ENCODE measurements at regions of chr1 and their contacts with region 1.

Region 1: DNA sequence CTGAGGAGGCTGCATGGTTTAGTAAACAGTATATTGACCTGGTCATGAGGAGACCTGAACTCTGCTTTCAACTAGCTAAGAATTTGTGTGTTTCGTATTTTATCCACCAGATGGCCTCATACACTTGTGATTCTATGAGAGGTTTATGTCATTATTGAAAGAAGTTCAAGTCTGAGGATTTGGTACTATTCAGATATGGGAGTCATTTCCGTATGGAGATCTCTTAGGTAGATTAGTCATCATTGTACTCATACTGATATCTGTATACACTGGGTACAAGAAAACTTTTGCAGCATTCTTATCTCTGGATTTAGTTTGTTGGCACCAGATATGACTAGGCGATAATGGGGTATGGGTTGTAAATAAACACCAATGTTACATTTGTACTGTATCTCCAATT is 26.6 kb downstream of the ATF6 start:
- DNase-seq: peak in 3 of 14 experiments; percentile 52 to 67 (median 66)
- ATAC-seq: peak; percentile 68
- H3K4me3 ChIP-seq: no peak overlapping the region
- H3K4me3 Mint-ChIP-seq: no peak overlapping the region
- H3K27ac ChIP-seq: no peak overlapping the region
- H3K27ac Mint-ChIP-seq: no peak overlapping the region
- H3K4me1 ChIP-seq: no peaks in the 10 kb centered on the region
- H3K4me1 Mint-ChIP-seq: peaks cover 14% of the 10 kb centered on the region
- H3K27me3 ChIP-seq: no peaks in the 10 kb centered on the region
- H3K27me3 Mint-ChIP-seq: no peaks in the 10 kb centered on the region
- CTCF ChIP-seq: peak; percentile 58

Region 2: GRCh38 chr1:161749509-161750407 is 43.0 kb before region 1 on chr1 and contains the start of gene DUSP12:
- CTCF ChIA-PET with region 1: no interaction called
- POLR2A ChIA-PET with region 1: no interaction called
- intact Hi-C with region 1: no loop called
- DNase-seq: peak; percentile 75 to 94 (median 82)
- ATAC-seq: peak; percentile 96
- H3K4me3 ChIP-seq: peak within 1 kb of the TSS; percentile 95
- H3K4me3 Mint-ChIP-seq: peak within 1 kb of the TSS; percentile 99
- H3K27ac ChIP-seq: peak within 1 kb of the TSS; percentile 70 to 73
- H3K27ac Mint-ChIP-seq: peak within 1 kb of the TSS; percentile 91
- H3K4me1 ChIP-seq: peaks cover 20% of the 10 kb centered on the region
- H3K4me1 Mint-ChIP-seq: peaks cover 43% of the 10 kb centered on the region
- H3K27me3 ChIP-seq: no peaks in the 10 kb centered on the region
- H3K27me3 Mint-ChIP-seq: peaks cover 8% of the 10 kb centered on the region
- CTCF ChIP-seq: no peak
- total RNA-seq, gene DUSP12: 20.3 to 23.0 TPM

Region 3: GRCh38 chr1:161864577-161864976 is 71.8 kb after region 1 on chr1:
- CTCF ChIA-PET with region 1: no interaction called
- POLR2A ChIA-PET with region 1: no interaction called
- intact Hi-C with region 1: loop called in 1 of 2 experiments (anchors 10 kb)
- DNase-seq: peak in 4 of 14 experiments; percentile 11 to 32 (median 25)
- ATAC-seq: peak; percentile 37
- H3K4me3 ChIP-seq: no peak overlapping the region
- H3K4me3 Mint-ChIP-seq: no peak overlapping the region
- H3K27ac ChIP-seq: no peak overlapping the region
- H3K27ac Mint-ChIP-seq: no peak overlapping the region
- H3K4me1 ChIP-seq: no peaks in the 10 kb centered on the region
- H3K4me1 Mint-ChIP-seq: peaks cover 6% of the 10 kb centered on the region
- H3K27me3 ChIP-seq: no peaks in the 10 kb centered on the region
- H3K27me3 Mint-ChIP-seq: no peaks in the 10 kb centered on the region
- CTCF ChIP-seq: peak; percentile 25

Region 4: GRCh38 chr1:162023547-162024501 is 231.1 kb after region 1 on chr1 and contains the start of gene OLFML2B:
- CTCF ChIA-PET with region 1: no interaction called
- POLR2A ChIA-PET with region 1: no interaction called
- intact Hi-C with region 1: loop called in 1 of 2 experiments (anchors 5 kb)
- DNase-seq: peak in 13 of 14 experiments; percentile 14 to 63 (median 38)
- ATAC-seq: peak; percentile 89
- H3K4me3 ChIP-seq: peak within 1 kb of the TSS; percentile 68
- H3K4me3 Mint-ChIP-seq: peak within 1 kb of the TSS; percentile 95
- H3K27ac ChIP-seq: no peak within 1 kb of the TSS
- H3K27ac Mint-ChIP-seq: no peak within 1 kb of the TSS
- H3K4me1 ChIP-seq: peaks cover 13% of the 10 kb centered on the region
- H3K4me1 Mint-ChIP-seq: peaks cover 7% of the 10 kb centered on the region
- H3K27me3 ChIP-seq: peaks cover 7 to 22% of the 10 kb centered on the region in 2 experiments
- H3K27me3 Mint-ChIP-seq: peaks cover 42% of the 10 kb centered on the region
- CTCF ChIP-seq: no peak
- total RNA-seq, gene OLFML2B: 0.08 TPM in 1 of 2 experiments, not detected in the other

Region 5: DNA sequence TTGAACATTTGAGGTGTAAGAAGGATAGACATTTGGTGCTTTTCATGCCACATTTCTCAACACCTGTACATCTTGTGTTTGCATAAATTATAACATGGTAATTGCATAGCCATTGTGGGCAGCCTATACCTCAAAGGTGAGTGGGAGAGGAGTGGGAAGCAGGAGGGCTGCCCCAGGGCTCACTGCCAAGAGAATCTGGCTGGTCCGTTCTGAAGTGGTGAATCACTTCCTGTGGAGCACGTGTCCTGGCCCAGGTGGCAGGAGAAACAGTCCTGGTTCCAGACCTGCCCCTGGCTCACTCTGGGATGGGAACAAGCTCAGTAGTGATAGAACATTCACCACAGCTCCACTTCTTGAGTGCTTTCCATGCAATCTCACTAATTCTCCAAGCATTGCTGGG is 242.5 kb after region 1 on chr1:
- CTCF ChIA-PET with region 1: interaction called, 47 read pairs
- POLR2A ChIA-PET with region 1: interaction called, 16 read pairs
- intact Hi-C with region 1: loop called (anchors 1 kb)
- DNase-seq: no peak
- ATAC-seq: no peak
- H3K4me3 ChIP-seq: no peak overlapping the region
- H3K4me3 Mint-ChIP-seq: no peak overlapping the region
- H3K27ac ChIP-seq: no peak overlapping the region
- H3K27ac Mint-ChIP-seq: no peak overlapping the region
- H3K4me1 ChIP-seq: peaks cover 5% of the 10 kb centered on the region
- H3K4me1 Mint-ChIP-seq: no peaks in the 10 kb centered on the region
- H3K27me3 ChIP-seq: peaks cover 2 to 4% of the 10 kb centered on the region in 2 experiments
- H3K27me3 Mint-ChIP-seq: peaks cover 19% of the 10 kb centered on the region
- CTCF ChIP-seq: no peak

Region 6: GRCh38 chr1:162040681-162041080 is 247.9 kb after region 1 on chr1:
- CTCF ChIA-PET with region 1: interaction called, 47 read pairs
- POLR2A ChIA-PET with region 1: interaction called, 16 read pairs
- intact Hi-C with region 1: loop called (anchors 1 kb)
- DNase-seq: no peak
- ATAC-seq: no peak
- H3K4me3 ChIP-seq: no peak overlapping the region
- H3K4me3 Mint-ChIP-seq: no peak overlapping the region
- H3K27ac ChIP-seq: no peak overlapping the region
- H3K27ac Mint-ChIP-seq: no peak overlapping the region
- H3K4me1 ChIP-seq: peaks cover 5% of the 10 kb centered on the region
- H3K4me1 Mint-ChIP-seq: no peaks in the 10 kb centered on the region
- H3K27me3 ChIP-seq: peaks cover 0 to 11% of the 10 kb centered on the region in 2 experiments
- H3K27me3 Mint-ChIP-seq: peaks cover 5% of the 10 kb centered on the region
- CTCF ChIP-seq: no peak

Region 7: DNA sequence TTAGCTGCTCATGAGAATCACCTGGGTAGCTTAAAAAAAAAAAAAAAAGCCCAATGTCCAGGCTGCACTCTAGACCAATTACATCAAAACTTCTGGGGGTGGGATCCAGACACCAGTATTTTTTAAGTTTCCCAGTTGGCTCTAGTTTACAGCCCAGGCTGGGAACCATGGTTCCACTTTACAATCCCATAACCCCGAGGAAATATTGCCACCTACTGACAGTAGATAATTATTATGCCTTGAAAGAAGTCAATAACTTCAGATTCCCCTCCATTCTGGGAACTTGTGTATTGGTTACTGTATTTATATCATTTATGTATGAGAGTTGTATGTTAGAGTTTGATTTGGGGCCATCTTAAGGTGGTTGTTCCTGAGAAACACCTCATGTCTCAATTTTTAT is 483.8 kb after region 1 on chr1:
- CTCF ChIA-PET with region 1: no interaction called
- POLR2A ChIA-PET with region 1: no interaction called
- intact Hi-C with region 1: loop called in 1 of 2 experiments (anchors 10 kb)
- DNase-seq: peak in 1 of 14 experiments; percentile 5
- ATAC-seq: no peak
- H3K4me3 ChIP-seq: no peak overlapping the region
- H3K4me3 Mint-ChIP-seq: no peak overlapping the region
- H3K27ac ChIP-seq: no peak overlapping the region
- H3K27ac Mint-ChIP-seq: no peak overlapping the region
- H3K4me1 ChIP-seq: no peaks in the 10 kb centered on the region
- H3K4me1 Mint-ChIP-seq: no peaks in the 10 kb centered on the region
- H3K27me3 ChIP-seq: peaks cover 3 to 12% of the 10 kb centered on the region in 2 experiments
- H3K27me3 Mint-ChIP-seq: peaks cover 47% of the 10 kb centered on the region
- CTCF ChIP-seq: no peak

Region 8: DNA sequence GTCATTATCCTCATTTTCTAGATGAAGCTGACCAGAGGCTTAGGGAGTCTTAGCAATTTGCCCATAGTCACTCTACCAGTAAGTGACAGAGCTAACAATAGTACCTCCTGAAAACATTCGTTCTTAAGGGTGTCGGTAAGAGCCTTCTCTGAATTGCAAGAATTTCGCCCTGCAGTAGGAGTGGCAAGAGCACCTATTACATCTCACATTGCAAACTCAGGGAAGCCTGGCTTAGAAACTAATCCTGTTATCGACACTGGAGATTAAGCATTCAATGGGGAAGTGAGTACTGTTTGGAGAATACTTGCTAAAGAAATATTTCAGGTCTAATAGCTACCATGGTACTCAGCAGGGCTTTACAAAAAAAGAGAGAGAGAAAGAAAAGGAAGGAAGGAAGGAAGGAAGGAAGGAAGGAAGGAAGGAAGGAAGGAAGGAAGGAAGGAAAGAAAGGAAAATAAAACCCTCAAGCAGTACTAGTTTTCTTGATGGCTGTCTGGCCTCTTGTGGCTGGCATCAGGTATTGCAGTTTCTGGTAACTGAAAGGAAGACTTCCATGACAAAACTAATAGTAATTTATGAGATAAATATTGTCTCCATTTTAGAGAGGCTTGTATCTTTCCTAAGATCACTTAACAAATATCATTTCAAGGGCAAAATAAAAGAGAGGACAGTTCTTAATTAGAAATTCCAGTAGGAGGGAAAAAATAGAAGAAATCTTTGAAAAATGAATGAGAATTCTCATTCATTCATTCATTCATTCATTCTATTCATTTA is 599.2 kb after region 1 on chr1:
- CTCF ChIA-PET with region 1: no interaction called
- POLR2A ChIA-PET with region 1: no interaction called
- intact Hi-C with region 1: loop called in 1 of 2 experiments (anchors 5 kb)
- DNase-seq: peak in 4 of 14 experiments; percentile 15 to 38 (median 26)
- ATAC-seq: no peak
- H3K4me3 ChIP-seq: no peak overlapping the region
- H3K4me3 Mint-ChIP-seq: no peak overlapping the region
- H3K27ac ChIP-seq: no peak overlapping the region
- H3K27ac Mint-ChIP-seq: no peak overlapping the region
- H3K4me1 ChIP-seq: no peaks in the 10 kb centered on the region
- H3K4me1 Mint-ChIP-seq: no peaks in the 10 kb centered on the region
- H3K27me3 ChIP-seq: peaks cover 4 to 13% of the 10 kb centered on the region in 2 experiments
- H3K27me3 Mint-ChIP-seq: peaks cover 37% of the 10 kb centered on the region
- CTCF ChIP-seq: peak; percentile 68

Region 9: DNA sequence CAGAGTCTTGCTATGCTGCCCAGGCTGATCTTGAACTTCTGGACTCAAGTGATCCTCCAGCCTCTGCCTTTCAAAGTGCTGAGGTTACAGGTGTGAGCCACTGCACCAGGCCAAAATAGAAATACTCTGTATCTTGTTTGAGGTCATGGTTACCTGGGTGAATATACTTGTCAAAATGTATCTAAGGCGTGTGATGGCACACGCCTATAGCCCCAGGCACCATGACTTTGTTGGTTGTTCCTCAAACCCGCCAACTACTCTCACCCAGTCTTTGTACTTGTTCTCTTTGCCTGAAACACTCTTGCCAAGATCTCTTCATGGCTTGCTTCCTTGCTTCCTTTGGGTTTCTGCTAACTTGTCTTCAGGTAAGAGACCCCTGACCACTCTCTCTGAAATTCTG is 1448.0 kb after region 1 on chr1:
- CTCF ChIA-PET with region 1: no interaction called
- POLR2A ChIA-PET with region 1: no interaction called
- intact Hi-C with region 1: no loop called
- DNase-seq: no peak
- ATAC-seq: no peak
- H3K4me3 ChIP-seq: no peak overlapping the region
- H3K4me3 Mint-ChIP-seq: no peak overlapping the region
- H3K27ac ChIP-seq: no peak overlapping the region
- H3K27ac Mint-ChIP-seq: no peak overlapping the region
- H3K4me1 ChIP-seq: no peaks in the 10 kb centered on the region
- H3K4me1 Mint-ChIP-seq: no peaks in the 10 kb centered on the region
- H3K27me3 ChIP-seq: no peaks in the 10 kb centered on the region
- H3K27me3 Mint-ChIP-seq: no peaks in the 10 kb centered on the region
- CTCF ChIP-seq: no peak

Measured in CD4-positive, alpha-beta T cell (primary cell).